A549 (cell line): ENCODE measurements at regions of chr3 and their contacts with region 1.

Region 1: GRCh38 chr3:109275702-109276293 is 40.5 kb downstream of the DPPA2 start:
- DNase-seq: peak; percentile 40 to 64
- ATAC-seq: peak; percentile 64 to 81; a peak in 4 of 6 replicates
- H3K4me3 ChIP-seq: no peak overlapping the region
- H3K27ac ChIP-seq: peak overlapping the region in 1 of 2 experiments; percentile 51; a peak in 3 of 6 replicates
- H3K4me1 ChIP-seq: peaks cover 6% of the 10 kb centered on the region; the same call in 1 of the 3 replicates
- CTCF ChIP-seq: peak; percentile 80
- EP300 ChIP-seq: no peak
- POLR2A ChIP-seq: no peak
- RAD21 ChIP-seq: peak; percentile 90 to 94

Region 2: GRCh38 chr3:109050591-109051167 is 225.1 kb before region 1 on chr3:
- CTCF ChIA-PET with region 1: no interaction called
- POLR2A ChIA-PET with region 1: no interaction called
- DNase-seq: peak; percentile 21 to 56
- ATAC-seq: peak in 1 of 2 experiments; percentile 57; a peak in 3 of 6 replicates
- H3K4me3 ChIP-seq: no peak overlapping the region
- H3K27ac ChIP-seq: no peak overlapping the region
- H3K4me1 ChIP-seq: no peaks in the 10 kb centered on the region
- CTCF ChIP-seq: peak; percentile 71
- EP300 ChIP-seq: no peak
- POLR2A ChIP-seq: no peak
- RAD21 ChIP-seq: peak; percentile 63 to 68

Region 3: DNA sequence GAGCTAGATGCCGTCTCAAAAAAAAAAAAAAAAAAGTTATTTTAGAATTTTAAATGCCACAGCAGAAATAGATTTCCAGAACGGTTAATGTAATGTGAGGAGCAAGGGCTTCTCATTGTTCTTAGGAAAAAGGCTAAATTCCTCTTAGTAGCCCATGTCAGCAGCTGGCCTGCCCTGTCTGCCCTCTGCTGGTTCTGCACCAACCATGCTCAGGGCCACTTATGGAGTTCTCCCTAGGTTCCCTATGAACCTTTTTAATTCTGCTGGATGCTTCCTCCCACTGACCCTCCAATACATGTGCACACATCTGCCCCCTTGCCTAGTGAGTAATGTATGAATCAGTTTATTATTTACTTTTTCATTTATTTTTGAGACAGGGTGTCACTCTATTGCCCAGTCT is 93.7 kb after region 1 on chr3:
- CTCF ChIA-PET with region 1: interaction called, 12 read pairs
- POLR2A ChIA-PET with region 1: no interaction called
- DNase-seq: peak in 1 of 2 experiments; percentile 46
- ATAC-seq: peak in 1 of 2 experiments; percentile 70; a peak in 3 of 6 replicates
- H3K4me3 ChIP-seq: no peak overlapping the region
- H3K27ac ChIP-seq: no peak overlapping the region
- H3K4me1 ChIP-seq: peaks cover under 1% of the 10 kb centered on the region; the same call in 2 of the 3 replicates
- CTCF ChIP-seq: peak; percentile 19; the same call in 2 of the 3 replicates
- EP300 ChIP-seq: no peak
- POLR2A ChIP-seq: no peak
- RAD21 ChIP-seq: no peak; a peak in 1 of 5 replicates

Region 4: GRCh38 chr3:109396806-109397205 is 121.0 kb after region 1 on chr3:
- CTCF ChIA-PET with region 1: interaction called, 28 read pairs
- POLR2A ChIA-PET with region 1: interaction called, 3 read pairs
- DNase-seq: no peak
- ATAC-seq: no peak
- H3K4me3 ChIP-seq: no peak overlapping the region
- H3K27ac ChIP-seq: no peak overlapping the region
- H3K4me1 ChIP-seq: no peaks in the 10 kb centered on the region
- CTCF ChIP-seq: no peak
- EP300 ChIP-seq: no peak
- POLR2A ChIP-seq: no peak
- RAD21 ChIP-seq: no peak